ENCODE measurements at regions of chr5 and their contacts with region 1.

Region 1: GRCh38 chr5:40831346-40832210 is 3.4 kb downstream of the RPL37 start:
- DNase-seq: no peak
- ATAC-seq: no peak
- H3K4me3 ChIP-seq: peak overlapping the region; percentile 98; the same call in 1 of the 3 replicates
- H3K27ac ChIP-seq: peak overlapping the region in 1 of 2 experiments; percentile 8; a peak in 1 of 6 replicates
- H3K4me1 ChIP-seq: peaks cover 39% of the 10 kb centered on the region
- CTCF ChIP-seq: no peak
- EP300 ChIP-seq: no peak
- POLR2A ChIP-seq: no peak
- RAD21 ChIP-seq: no peak

Region 2: DNA sequence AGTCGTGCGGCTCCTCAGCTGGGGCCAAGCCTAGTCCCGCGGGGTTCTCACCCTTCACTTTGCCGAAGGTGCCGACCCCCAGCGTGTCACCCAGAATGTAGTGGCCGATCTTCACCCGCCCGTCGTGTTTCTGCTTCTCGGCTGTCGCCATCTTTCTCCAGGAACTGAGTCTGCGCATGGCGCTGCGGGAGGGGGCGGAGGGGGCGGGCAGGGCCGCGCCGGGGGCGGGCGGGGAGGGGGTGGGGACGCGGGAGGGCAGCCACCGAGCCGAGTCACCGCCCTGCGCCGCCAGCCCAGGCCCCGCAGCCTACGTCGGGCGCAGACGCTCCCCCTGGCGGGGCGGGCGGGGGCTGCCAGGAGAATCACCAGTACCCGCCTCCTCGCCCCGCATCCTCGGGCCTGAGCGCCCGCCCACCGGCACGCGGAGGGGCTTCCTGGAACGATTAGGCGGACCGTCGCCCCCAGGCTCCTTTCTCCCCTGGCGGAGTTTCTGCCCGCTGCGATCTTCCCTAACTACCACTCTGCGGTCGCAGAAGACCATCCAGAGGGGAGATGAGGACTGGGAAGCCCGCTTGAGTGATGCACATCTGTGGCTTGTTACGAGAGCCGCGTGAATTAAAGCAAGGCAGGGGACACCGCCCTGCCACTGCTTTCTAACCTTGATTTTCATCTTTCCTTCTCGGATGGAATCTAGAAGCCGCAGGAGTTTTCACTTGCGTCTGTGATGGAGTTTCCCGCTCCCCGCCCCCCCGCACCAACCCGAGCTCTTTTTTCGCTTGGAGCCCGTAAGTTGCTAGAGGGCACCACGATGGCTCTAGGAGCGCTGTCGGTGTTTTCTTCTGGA is 33.3 kb before region 1 on chr5 and contains the start of gene PRKAA1:
- CTCF ChIA-PET with region 1: interaction called, 4 read pairs
- POLR2A ChIA-PET with region 1: interaction called, 10 read pairs
- DNase-seq: peak; percentile 80 to 87
- ATAC-seq: peak; percentile 96
- H3K4me3 ChIP-seq: peak within 1 kb of the TSS; percentile 80
- H3K27ac ChIP-seq: peak within 1 kb of the TSS; percentile 99 to 100
- H3K4me1 ChIP-seq: peaks cover 29% of the 10 kb centered on the region
- CTCF ChIP-seq: peak; percentile 58
- EP300 ChIP-seq: no peak
- POLR2A ChIP-seq: peak; percentile 81
- RAD21 ChIP-seq: peak; percentile 31 to 57; a peak in 3 of 5 replicates
- polyA plus RNA-seq, gene PRKAA1: 84.3 and 107 TPM in 2 replicates

Measured in A549 (cell line).